ENCODE measurements at regions of chr14 and their contacts with region 1.

Region 1: GRCh38 chr14:64303471-64303917 is 9.3 kb upstream of the ESR2 start:
- DNase-seq: no peak
- ATAC-seq: peak; percentile 44 to 54
- H3K4me3 ChIP-seq: no peak overlapping the region
- H3K27ac ChIP-seq: no peak overlapping the region
- H3K4me1 ChIP-seq: no peaks in the 10 kb centered on the region
- H3K27me3 ChIP-seq: no peaks in the 10 kb centered on the region

Region 2: DNA sequence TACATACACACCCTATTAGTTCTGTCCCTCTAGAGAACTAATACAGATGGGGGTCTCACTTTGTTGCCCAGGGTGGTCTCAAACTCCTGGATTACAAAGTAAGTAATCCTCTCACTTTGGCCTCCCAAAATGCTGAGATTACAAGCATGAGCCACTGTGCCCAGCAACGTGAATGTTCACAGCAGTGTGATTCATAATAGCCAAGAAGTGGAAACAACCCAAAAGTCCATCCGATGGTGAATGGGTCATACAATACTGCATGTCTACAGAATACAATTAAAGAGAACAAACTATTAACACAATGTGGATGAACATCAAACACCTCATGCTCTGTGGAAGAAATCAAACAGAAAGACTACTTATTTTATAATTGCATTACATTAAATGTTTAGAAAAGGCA is 508.0 kb before region 1 on chr14:
- intact Hi-C with region 1: loop called (anchors 2 to 10 kb)
- DNase-seq: no peak
- ATAC-seq: no peak
- H3K4me3 ChIP-seq: no peak overlapping the region
- H3K27ac ChIP-seq: no peak overlapping the region
- H3K4me1 ChIP-seq: peaks cover 2% of the 10 kb centered on the region
- H3K27me3 ChIP-seq: no peaks in the 10 kb centered on the region

Region 3: GRCh38 chr14:63800651-63801375 is 502.7 kb before region 1 on chr14:
- intact Hi-C with region 1: loop called (anchors 2 to 10 kb)
- DNase-seq: no peak
- ATAC-seq: no peak
- H3K4me3 ChIP-seq: no peak overlapping the region
- H3K27ac ChIP-seq: no peak overlapping the region
- H3K4me1 ChIP-seq: peaks cover 2% of the 10 kb centered on the region
- H3K27me3 ChIP-seq: no peaks in the 10 kb centered on the region

Region 4: GRCh38 chr14:64095620-64096019 is 207.9 kb before region 1 on chr14:
- intact Hi-C with region 1: no loop called
- DNase-seq: no peak
- ATAC-seq: no peak
- H3K4me3 ChIP-seq: no peak overlapping the region
- H3K27ac ChIP-seq: no peak overlapping the region
- H3K4me1 ChIP-seq: no peaks in the 10 kb centered on the region
- H3K27me3 ChIP-seq: no peaks in the 10 kb centered on the region